ENCODE measurements at regions of chr11 and their contacts with region 1.

Region 1: DNA sequence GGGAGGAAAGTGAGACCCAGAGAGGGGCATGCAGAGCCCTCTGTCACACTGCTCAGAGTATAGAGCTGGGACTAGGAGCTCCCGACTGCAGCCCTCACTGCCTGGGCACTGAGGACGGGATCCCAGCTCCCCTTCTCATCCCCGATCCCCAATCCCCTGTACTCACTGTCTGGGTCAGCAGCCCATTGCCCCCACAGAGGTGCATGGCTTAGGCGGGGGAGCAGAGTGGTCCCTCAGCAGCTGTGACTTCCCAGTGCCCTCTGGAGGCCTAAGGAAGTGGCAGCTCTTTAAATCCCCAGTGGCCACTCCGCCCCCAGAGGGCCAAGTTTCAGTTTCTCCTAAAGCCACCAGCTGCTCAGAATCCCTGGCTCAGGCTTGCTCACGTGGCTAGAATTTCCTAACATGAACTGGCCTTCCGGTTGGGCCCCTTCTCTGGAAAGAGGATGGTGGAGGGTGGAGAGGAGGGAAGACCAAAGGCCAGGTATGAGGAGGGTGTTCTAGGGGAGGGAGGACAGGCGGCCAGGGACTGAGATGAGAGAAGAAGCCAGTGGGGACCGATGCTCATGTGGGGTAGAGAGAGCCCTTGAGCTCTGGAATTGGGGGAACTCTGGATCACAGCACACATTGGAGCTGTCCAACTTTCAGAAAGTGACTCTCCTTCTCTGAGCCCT is at the start of gene BATF2:
- DNase-seq: peak; percentile 94
- ATAC-seq: peak; percentile 85
- H3K4me3 ChIP-seq: peak within 1 kb of the TSS; percentile 53 to 81 (median 60)
- H3K27ac ChIP-seq: peak within 1 kb of the TSS; percentile 56
- H3K4me1 ChIP-seq: peaks cover 58% of the 10 kb centered on the region
- H3K27me3 ChIP-seq: no peaks in the 10 kb centered on the region; a peak in 1 of 5 replicates
- CTCF ChIP-seq: peak; percentile 95
- EP300 ChIP-seq: peak in 1 of 2 experiments; percentile 63; a peak in 2 of 4 replicates
- POLR2A ChIP-seq: peak; percentile 71 to 84
- RAD21 ChIP-seq: peak; percentile 70
- total RNA-seq, gene BATF2: 3.9 and 4.2 TPM in 2 replicates

Region 2: GRCh38 chr11:64652586-64653387 is 344.1 kb before region 1 on chr11:
- CTCF ChIA-PET with region 1: no interaction called
- POLR2A ChIA-PET with region 1: no interaction called
- in situ Hi-C with region 1: no loop called
- intact Hi-C with region 1: no loop called
- DNase-seq: peak; percentile 57
- ATAC-seq: peak; percentile 78
- H3K4me3 ChIP-seq: no peak overlapping the region
- H3K27ac ChIP-seq: no peak overlapping the region
- H3K4me1 ChIP-seq: no peaks in the 10 kb centered on the region
- H3K27me3 ChIP-seq: peaks cover 3 to 40% of the 10 kb centered on the region in 2 experiments; a peak in 4 of 5 replicates
- CTCF ChIP-seq: peak; percentile 96
- EP300 ChIP-seq: no peak
- POLR2A ChIP-seq: no peak
- RAD21 ChIP-seq: peak; percentile 90

Region 3: DNA sequence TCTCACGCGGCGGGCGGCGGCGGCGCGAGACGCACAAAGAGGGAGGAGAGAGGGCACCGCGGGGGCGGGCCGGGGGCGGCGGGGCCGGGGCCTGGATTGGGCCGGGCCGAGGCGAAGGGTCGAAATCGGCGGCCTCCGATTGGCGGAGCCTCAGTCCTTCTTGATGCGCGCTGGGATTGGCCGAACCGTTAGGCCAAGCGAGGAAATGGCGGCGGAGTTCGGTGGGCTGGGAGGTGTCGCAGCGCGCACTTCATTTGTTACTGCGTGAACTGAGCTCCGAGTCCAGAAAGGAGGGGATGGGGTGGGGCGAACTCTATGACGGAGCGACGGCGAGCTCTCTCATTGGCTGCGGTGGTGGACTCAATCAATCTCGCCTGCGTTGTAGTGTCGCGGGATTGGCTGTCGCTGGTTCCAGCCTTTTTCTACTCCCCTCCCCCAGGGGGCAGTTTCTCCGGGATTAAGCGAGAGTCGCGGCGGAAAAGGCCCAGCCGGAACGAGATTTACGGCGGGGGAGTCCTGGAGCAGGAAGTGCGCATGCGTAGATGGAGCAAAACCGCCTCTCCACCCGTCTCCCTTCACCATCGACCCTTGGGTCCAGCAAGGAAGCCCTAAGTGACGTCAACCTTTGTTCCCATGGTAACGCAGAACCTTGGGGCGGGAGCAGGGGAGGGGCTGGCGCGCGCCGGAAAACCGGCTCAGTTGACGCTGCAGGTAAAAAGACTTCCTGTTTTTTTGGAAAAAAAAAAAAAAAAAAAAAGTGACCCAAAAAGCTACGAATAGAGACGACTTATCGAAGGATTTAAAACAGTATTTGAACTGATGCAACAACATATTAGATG is 218.1 kb before region 1 on chr11 and contains the start of gene SF1:
- CTCF ChIA-PET with region 1: no interaction called
- POLR2A ChIA-PET with region 1: interaction called, 10 read pairs
- in situ Hi-C with region 1: no loop called
- intact Hi-C with region 1: no loop called
- DNase-seq: peak; percentile 100
- ATAC-seq: peak; percentile 97
- H3K4me3 ChIP-seq: peak within 1 kb of the TSS; percentile 94 to 98 (median 94)
- H3K27ac ChIP-seq: peak within 1 kb of the TSS; percentile 99
- H3K4me1 ChIP-seq: peaks cover 39% of the 10 kb centered on the region
- H3K27me3 ChIP-seq: no peaks in the 10 kb centered on the region; a peak in 1 of 5 replicates
- CTCF ChIP-seq: peak; percentile 57
- EP300 ChIP-seq: 0 out of 4 replicates have a peak, but pooled peaks of 1 of the 2 experiments have one; percentile 6
- POLR2A ChIP-seq: peak; percentile 95 to 97
- RAD21 ChIP-seq: no peak
- total RNA-seq, gene SF1: 42.5 and 70.4 TPM in 2 replicates

Region 4: DNA sequence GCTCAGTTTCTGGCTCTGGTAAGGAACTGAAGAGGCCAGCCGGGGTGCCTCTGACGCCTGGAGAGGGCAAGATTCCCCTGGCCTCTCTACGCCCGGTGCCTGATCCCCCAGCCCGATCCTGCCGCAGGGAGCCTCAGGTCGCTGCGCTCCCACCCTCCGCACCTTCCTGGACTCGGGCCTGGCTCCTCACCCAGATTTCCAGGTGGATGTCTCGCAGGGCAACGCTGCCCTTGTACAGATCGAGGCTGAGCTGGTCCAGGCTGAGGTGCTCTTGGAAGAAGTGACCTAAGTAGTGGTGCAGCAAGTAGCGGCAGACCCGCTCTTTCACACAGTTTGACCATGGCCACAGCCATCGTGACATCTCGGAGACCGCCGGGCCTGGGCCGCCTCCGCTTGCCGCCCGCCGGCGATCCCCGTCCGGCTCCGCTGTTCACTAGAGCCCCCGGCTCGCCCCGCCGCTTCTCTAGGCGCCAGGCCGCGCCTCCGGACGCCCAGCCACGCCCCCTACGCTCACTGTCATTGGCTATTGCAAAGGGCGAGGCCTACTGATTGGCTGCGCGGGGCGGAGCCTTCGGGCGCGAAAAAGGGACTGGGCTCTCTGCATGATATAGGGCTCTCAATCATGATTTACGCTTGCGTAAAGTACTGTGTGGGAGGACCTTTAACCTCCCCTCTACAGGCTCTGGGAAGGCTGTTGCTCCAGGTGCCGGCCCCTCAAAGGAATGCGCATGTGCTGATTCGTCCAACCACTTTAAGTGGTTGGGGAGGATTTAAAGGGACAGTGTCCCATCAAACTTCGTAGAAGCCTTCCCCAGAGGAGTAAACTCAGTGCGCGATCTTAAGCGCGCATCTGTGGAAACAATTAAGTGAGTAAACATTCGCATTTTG is 79.8 kb before region 1 on chr11 and contains the start of gene ATG2A:
- CTCF ChIA-PET with region 1: no interaction called
- POLR2A ChIA-PET with region 1: interaction called, 5 read pairs
- in situ Hi-C with region 1: no loop called
- intact Hi-C with region 1: loop called (anchors 2 kb)
- DNase-seq: peak; percentile 99
- ATAC-seq: peak; percentile 95
- H3K4me3 ChIP-seq: peak within 1 kb of the TSS; percentile 78 to 100 (median 93)
- H3K27ac ChIP-seq: peak within 1 kb of the TSS; percentile 63
- H3K4me1 ChIP-seq: peaks cover 36% of the 10 kb centered on the region
- H3K27me3 ChIP-seq: no peaks in the 10 kb centered on the region; a peak in 1 of 5 replicates
- CTCF ChIP-seq: no peak
- EP300 ChIP-seq: 0 out of 4 replicates have a peak, but pooled peaks of 1 of the 2 experiments have one; percentile 7
- POLR2A ChIP-seq: peak; percentile 73 to 93
- RAD21 ChIP-seq: peak; percentile 36; the same call in 1 of the 2 replicates
- total RNA-seq, gene ATG2A: 6.5 and 6.7 TPM in 2 replicates

Region 5: GRCh38 chr11:64935359-64936081 is 61.3 kb before region 1 on chr11 and contains the start of gene GPHA2:
- CTCF ChIA-PET with region 1: no interaction called
- POLR2A ChIA-PET with region 1: interaction called, 40 read pairs
- in situ Hi-C with region 1: no loop called
- intact Hi-C with region 1: loop called (anchors 2 kb)
- DNase-seq: peak; percentile 68
- ATAC-seq: peak; percentile 77
- H3K4me3 ChIP-seq: peak within 1 kb of the TSS; percentile 52 to 71 (median 52); a peak in 5 of 6 replicates
- H3K27ac ChIP-seq: peak within 1 kb of the TSS; percentile 12
- H3K4me1 ChIP-seq: peaks cover 39% of the 10 kb centered on the region
- H3K27me3 ChIP-seq: peaks cover 0 to 7% of the 10 kb centered on the region in 2 experiments; a peak in 3 of 5 replicates
- CTCF ChIP-seq: peak; percentile 60
- EP300 ChIP-seq: no peak
- POLR2A ChIP-seq: peak; percentile 66 to 91
- RAD21 ChIP-seq: no peak
- total RNA-seq, gene GPHA2: 11.6 and 19.1 TPM in 2 replicates

Region 6: GRCh38 chr11:65027213-65028067 is 30.6 kb after region 1 on chr11 and contains the start of gene SNX15:
- CTCF ChIA-PET with region 1: no interaction called
- POLR2A ChIA-PET with region 1: interaction called, 12 read pairs
- in situ Hi-C with region 1: no loop called
- intact Hi-C with region 1: no loop called
- DNase-seq: peak; percentile 94
- ATAC-seq: peak; percentile 89
- H3K4me3 ChIP-seq: peak within 1 kb of the TSS; percentile 68 to 78 (median 75)
- H3K27ac ChIP-seq: peak within 1 kb of the TSS; percentile 85
- H3K4me1 ChIP-seq: peaks cover 48% of the 10 kb centered on the region
- H3K27me3 ChIP-seq: no peaks in the 10 kb centered on the region; a peak in 1 of 5 replicates
- CTCF ChIP-seq: peak; percentile 74
- EP300 ChIP-seq: no peak
- POLR2A ChIP-seq: peak; percentile 62 to 75
- RAD21 ChIP-seq: peak; percentile 49; the same call in 1 of the 2 replicates
- total RNA-seq, gene SNX15: 20.7 and 22.6 TPM in 2 replicates

Region 7: GRCh38 chr11:65060275-65060824 is 63.5 kb after region 1 on chr11:
- CTCF ChIA-PET with region 1: no interaction called
- POLR2A ChIA-PET with region 1: no interaction called
- in situ Hi-C with region 1: no loop called
- intact Hi-C with region 1: no loop called
- DNase-seq: no peak
- ATAC-seq: no peak
- H3K4me3 ChIP-seq: peak overlapping the region in 1 of 3 experiments; percentile 0; a peak in 1 of 6 replicates
- H3K27ac ChIP-seq: no peak overlapping the region
- H3K4me1 ChIP-seq: peaks cover 76% of the 10 kb centered on the region
- H3K27me3 ChIP-seq: no peaks in the 10 kb centered on the region
- CTCF ChIP-seq: no peak
- EP300 ChIP-seq: no peak
- POLR2A ChIP-seq: no peak
- RAD21 ChIP-seq: no peak

Region 8: GRCh38 chr11:65185869-65186341 is 189.1 kb after region 1 on chr11:
- CTCF ChIA-PET with region 1: no interaction called
- POLR2A ChIA-PET with region 1: no interaction called
- in situ Hi-C with region 1: no loop called
- intact Hi-C with region 1: no loop called
- DNase-seq: no peak
- ATAC-seq: no peak
- H3K4me3 ChIP-seq: no peak overlapping the region
- H3K27ac ChIP-seq: no peak overlapping the region
- H3K4me1 ChIP-seq: peaks cover 16% of the 10 kb centered on the region
- H3K27me3 ChIP-seq: no peaks in the 10 kb centered on the region; a peak in 1 of 5 replicates
- CTCF ChIP-seq: peak; percentile 32
- EP300 ChIP-seq: no peak
- POLR2A ChIP-seq: no peak
- RAD21 ChIP-seq: no peak